ENCODE measurements at regions of chr9 and their contacts with region 1.

Region 1: GRCh38 chr9:128361986-128362646 is 9.1 kb upstream of the URM1 start:
- DNase-seq: peak; percentile 78 to 85
- ATAC-seq: peak; percentile 87 to 93 (median 92)
- H3K4me3 ChIP-seq: peak overlapping the region in 9 of 10 donors; percentile 20 to 60 (median 54)
- H3K27ac ChIP-seq: peak overlapping the region in 9 of 10 donors; percentile 10 to 82 (median 61)
- H3K4me1 ChIP-seq: peaks cover 2 to 34% (median 26%) of the 10 kb centered on the region in 9 donors
- H3K27me3 ChIP-seq: no peaks in the 10 kb centered on the region
- CTCF ChIP-seq: peak; percentile 82 to 98 (median 91)

Region 2: DNA sequence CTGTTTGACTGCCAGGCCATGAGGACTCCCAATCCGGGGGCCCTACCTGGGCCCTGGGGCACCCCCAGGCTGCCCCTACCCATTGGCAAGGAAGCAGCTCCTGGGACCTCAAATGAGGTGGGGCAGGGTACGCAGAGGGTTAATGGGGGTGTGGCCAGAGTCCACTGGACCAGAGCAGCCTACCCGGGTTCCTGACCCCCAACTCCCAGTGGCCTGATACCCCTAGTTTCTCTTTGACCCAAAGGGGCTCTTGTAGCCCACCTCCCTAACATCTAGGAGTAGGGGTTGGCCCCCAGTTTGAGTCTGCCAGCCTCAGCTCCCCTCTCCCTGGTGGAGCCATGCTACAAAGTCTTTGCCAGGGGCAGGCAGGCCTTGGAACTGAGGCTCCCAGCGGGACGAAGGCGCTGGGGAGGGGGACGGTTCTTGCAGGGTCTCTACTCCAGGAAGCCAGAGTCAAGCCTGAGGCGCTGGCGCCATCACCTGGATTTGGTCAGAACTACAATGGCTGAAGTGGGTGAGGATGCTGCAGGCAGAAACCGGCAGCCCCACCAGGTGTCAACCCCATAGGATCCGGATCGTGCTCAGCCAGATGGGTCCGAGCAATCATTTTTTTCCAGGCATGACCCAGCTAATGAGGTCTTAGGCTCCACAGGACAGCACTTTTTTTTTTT is 50.1 kb after region 1 on chr9:
- intact Hi-C with region 1: loop called (anchors 1 to 10 kb)
- DNase-seq: peak in 1 of 2 donors; percentile 43
- ATAC-seq: peak in 5 of 8 donors; percentile 32 to 76 (median 47)
- H3K4me3 ChIP-seq: no peak overlapping the region
- H3K27ac ChIP-seq: no peak overlapping the region
- H3K4me1 ChIP-seq: peaks cover 0 to 32% (median 5%) of the 10 kb centered on the region in 9 donors
- H3K27me3 ChIP-seq: peaks cover 0 to 82% (median 51%) of the 10 kb centered on the region in 7 donors
- CTCF ChIP-seq: peak; percentile 28 to 67 (median 63)

Region 3: DNA sequence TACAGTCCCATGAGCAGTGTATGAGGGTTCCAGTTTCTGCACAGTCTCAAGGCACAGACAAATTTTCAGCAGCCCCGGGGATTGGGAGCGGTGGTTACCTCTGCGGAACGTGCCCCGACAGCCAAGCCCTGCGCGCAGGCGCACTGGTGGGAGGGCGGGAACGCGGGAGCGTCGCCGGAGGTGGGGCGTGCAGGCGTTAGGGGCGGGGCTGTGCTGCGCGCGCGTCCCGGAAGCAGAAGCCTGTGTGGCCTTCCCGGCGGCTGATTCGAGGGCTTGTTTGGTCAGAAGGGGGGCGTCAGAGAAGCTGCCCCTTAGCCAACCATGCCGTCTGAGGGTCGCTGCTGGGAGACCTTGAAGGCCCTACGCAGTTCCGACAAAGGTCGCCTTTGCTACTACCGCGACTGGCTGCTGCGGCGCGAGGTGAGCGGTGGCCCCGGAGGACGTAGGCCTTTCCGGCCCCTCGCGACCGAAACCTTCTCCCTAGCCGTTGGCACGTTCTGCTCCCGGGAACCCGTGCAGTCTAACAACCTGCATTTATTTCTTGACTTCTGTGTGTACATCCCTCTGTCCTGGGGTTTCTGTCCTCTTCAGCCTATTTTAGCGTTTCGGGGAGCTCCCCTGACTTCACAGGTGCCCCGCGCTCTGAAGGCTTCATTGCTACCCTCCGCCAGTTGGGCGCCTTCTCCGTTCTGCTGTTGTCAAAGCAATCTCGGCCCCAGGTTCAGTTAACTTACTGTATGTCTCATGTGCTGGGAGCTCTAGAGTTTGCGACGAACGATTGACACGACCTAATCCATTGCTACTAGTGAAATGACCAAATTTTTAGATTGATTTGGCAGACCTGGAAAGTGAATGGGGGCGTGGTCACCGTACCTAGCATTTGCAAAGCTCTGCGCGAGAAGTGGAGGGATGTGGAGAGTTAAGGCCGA is 142.6 kb after region 1 on chr9 and contains the start of gene GLE1:
- intact Hi-C with region 1: no loop called
- DNase-seq: peak; percentile 94 to 98
- ATAC-seq: peak; percentile 99 to 100 (median 100)
- H3K4me3 ChIP-seq: peak within 1 kb of the TSS; percentile 49 to 99 (median 86)
- H3K27ac ChIP-seq: peak within 1 kb of the TSS in 9 of 10 donors; percentile 77 to 94 (median 84)
- H3K4me1 ChIP-seq: peaks cover 4 to 28% (median 24%) of the 10 kb centered on the region in 9 donors
- H3K27me3 ChIP-seq: no peaks in the 10 kb centered on the region
- CTCF ChIP-seq: no peak
- total RNA-seq, gene GLE1: 15.0 to 24.5 (median 19.9) TPM

Region 4: GRCh38 chr9:128635283-128636023 is 273.3 kb after region 1 on chr9:
- intact Hi-C with region 1: loop called in 1 of 10 experiments (anchors 5 kb)
- DNase-seq: peak; percentile 86 to 88
- ATAC-seq: peak; percentile 84 to 93 (median 92)
- H3K4me3 ChIP-seq: peak overlapping the region; percentile 18 to 44 (median 38)
- H3K27ac ChIP-seq: peak overlapping the region; percentile 78 to 97 (median 96)
- H3K4me1 ChIP-seq: peaks cover 13 to 35% (median 20%) of the 10 kb centered on the region in 9 donors
- H3K27me3 ChIP-seq: no peaks in the 10 kb centered on the region
- CTCF ChIP-seq: peak; percentile 47 to 84 (median 78)